GM12878 (cell line): ENCODE measurements at regions of chr13 and their contacts with region 1.

Region 1: GRCh38 chr13:106561551-106562170 is 6.3 kb downstream of the ARGLU1 start:
- DNase-seq: peak; percentile 55
- ATAC-seq: peak; percentile 85
- H3K4me3 ChIP-seq: peak overlapping the region; percentile 51; the same call in 1 of the 2 replicates
- H3K27ac ChIP-seq: peak overlapping the region; percentile 7
- H3K4me1 ChIP-seq: peaks cover 13% of the 10 kb centered on the region
- H3K27me3 ChIP-seq: no peaks in the 10 kb centered on the region
- CTCF ChIP-seq: no peak
- EP300 ChIP-seq: no peak
- POLR2A ChIP-seq: peak; percentile 64
- RAD21 ChIP-seq: no peak

Region 2: DNA sequence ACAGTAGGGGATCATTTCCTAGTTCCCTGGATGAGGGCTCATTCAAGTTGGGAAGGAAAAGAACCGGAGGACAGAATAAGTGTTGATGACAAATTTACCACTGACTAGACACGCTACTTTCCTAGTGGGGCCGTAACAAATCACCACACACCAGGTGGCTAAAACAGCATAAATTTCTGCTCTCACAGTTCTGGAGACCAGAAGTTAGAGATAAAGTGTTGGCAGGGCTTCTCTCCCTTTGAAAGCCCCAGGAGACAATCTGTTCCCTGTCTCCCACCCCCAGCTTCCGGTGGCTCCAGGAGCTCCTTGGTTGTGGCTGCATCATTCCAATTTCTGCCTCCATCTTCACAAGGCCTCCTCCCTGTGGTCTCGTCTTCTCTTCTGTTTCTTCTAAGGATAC is 71.7 kb after region 1 on chr13:
- CTCF ChIA-PET with region 1: no interaction called
- POLR2A ChIA-PET with region 1: no interaction called
- RAD21 ChIA-PET with region 1: no interaction called
- SMC1A ChIA-PET with region 1: no interaction called
- in situ Hi-C with region 1: no loop called
- intact Hi-C with region 1: no loop called
- DNase-seq: no peak
- ATAC-seq: no peak
- H3K4me3 ChIP-seq: no peak overlapping the region
- H3K27ac ChIP-seq: no peak overlapping the region
- H3K4me1 ChIP-seq: no peaks in the 10 kb centered on the region
- H3K27me3 ChIP-seq: no peaks in the 10 kb centered on the region
- CTCF ChIP-seq: no peak
- EP300 ChIP-seq: no peak
- POLR2A ChIP-seq: no peak
- RAD21 ChIP-seq: no peak

Region 3: DNA sequence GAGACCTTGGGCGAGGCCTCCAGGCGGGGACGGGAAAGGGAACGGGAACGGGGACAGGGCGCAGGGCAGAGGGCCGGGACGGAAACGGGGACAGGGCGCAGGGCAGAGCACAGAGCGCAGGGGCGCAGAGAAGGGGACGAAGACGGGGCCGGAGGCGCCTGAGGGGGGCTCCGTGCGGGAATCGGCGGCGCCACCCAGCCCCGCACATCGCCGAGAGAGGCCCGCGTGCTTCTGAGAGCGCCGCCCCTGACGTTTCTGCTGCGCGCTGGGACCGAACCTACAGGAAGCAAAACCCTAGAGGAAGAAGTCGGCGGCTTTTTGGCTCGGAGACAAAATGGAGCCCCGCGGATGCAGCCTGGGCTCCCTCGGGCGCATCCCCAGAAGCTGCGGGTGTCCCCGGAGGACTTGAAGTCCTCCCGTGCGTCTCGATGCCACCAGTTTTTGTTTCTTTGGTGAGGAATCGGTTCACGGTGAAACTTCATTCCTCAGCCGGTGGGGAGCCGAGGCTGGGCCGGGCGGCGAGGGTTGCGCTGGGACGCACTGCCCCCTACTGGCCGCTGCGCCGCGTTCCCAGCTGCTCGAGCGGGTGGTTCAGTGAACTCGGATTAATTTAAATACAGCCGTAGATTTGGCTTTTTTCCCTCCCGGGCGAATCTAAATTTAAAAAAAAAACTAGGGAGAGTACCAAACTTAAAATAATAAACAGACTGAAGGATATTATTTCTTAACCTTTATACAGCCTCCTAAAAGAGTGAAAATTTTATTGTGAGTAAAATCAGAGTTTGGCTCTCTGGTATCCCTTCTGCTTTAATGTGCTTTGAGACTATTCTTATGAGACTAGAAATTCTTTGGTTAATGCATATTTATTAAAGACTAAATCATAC is 356.3 kb after region 1 on chr13:
- CTCF ChIA-PET with region 1: interaction called, 4 read pairs
- POLR2A ChIA-PET with region 1: no interaction called
- RAD21 ChIA-PET with region 1: no interaction called
- SMC1A ChIA-PET with region 1: no interaction called
- in situ Hi-C with region 1: no loop called
- intact Hi-C with region 1: loop called (anchors 5 kb)
- DNase-seq: no peak
- ATAC-seq: peak; percentile 99
- H3K4me3 ChIP-seq: peak overlapping the region; percentile 52; the same call in 1 of the 2 replicates
- H3K27ac ChIP-seq: no peak overlapping the region
- H3K4me1 ChIP-seq: no peaks in the 10 kb centered on the region
- H3K27me3 ChIP-seq: no peaks in the 10 kb centered on the region
- CTCF ChIP-seq: peak; percentile 80 to 89 (median 88)
- EP300 ChIP-seq: no peak
- POLR2A ChIP-seq: 0 out of 2 replicates have a peak, but pooled peaks have one; percentile 16
- RAD21 ChIP-seq: peak; percentile 69